Activated CD4-positive, alpha-beta T cell treated with anti-CD3 and anti-CD28 coated beads, Interleukin-2, amount 10 ng/mL, durations not matched to agents 7 days and 5 days (primary cell): ENCODE measurements at regions of chr1 and their contacts with region 1.

Region 1: DNA sequence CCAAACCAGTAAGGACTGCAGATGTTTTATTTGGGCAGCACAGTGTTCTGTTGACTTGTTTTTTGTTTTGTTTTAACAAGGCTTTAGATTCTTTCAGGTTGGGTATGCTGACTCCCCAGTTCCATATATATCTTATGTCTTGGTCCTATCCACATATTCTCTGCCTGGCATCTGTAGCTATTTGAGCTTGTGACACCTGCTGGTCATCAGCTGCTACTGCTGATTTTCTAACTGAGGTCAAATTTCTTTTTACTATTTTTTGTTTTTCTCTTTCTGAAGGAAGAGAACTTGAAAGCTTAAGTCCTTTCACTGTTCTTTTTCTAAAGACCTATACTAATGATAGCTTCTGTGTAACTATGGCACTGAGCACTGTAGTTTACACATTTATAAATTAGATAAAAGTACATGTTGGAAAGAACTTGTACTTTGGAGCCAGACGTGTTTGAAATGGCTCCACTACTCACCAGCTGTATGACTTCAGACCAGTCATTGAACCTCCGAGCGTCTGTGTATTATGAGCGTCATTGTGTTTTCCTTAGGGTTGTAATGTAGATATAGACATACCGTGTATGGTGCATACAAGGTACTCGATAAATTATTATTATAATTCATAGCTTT is 109.4 kb downstream of the NRDC start:
- DNase-seq: peak; percentile 38
- H3K4me3 Mint-ChIP-seq: no peak overlapping the region
- H3K27ac Mint-ChIP-seq: no peak overlapping the region
- H3K4me1 Mint-ChIP-seq: peaks cover 5% of the 10 kb centered on the region
- H3K27me3 Mint-ChIP-seq: no peaks in the 10 kb centered on the region

Region 2: GRCh38 chr1:51523931-51524330 is 245.1 kb before region 1 on chr1:
- CTCF ChIA-PET with region 1: no interaction called
- POLR2A ChIA-PET with region 1: interaction called, 10 read pairs
- DNase-seq: no peak
- H3K4me3 Mint-ChIP-seq: no peak overlapping the region
- H3K27ac Mint-ChIP-seq: no peak overlapping the region
- H3K4me1 Mint-ChIP-seq: peaks cover 18% of the 10 kb centered on the region
- H3K27me3 Mint-ChIP-seq: no peaks in the 10 kb centered on the region

Region 3: GRCh38 chr1:51708911-51709760 is 59.9 kb before region 1 on chr1:
- CTCF ChIA-PET with region 1: no interaction called
- POLR2A ChIA-PET with region 1: no interaction called
- DNase-seq: no peak
- H3K4me3 Mint-ChIP-seq: no peak overlapping the region
- H3K27ac Mint-ChIP-seq: no peak overlapping the region
- H3K4me1 Mint-ChIP-seq: no peaks in the 10 kb centered on the region
- H3K27me3 Mint-ChIP-seq: no peaks in the 10 kb centered on the region